Activated naive CD4-positive, alpha-beta T cell treated with anti-CD3 and anti-CD28 coated beads, Interleukin-2, amount 10 ng/mL, durations not matched to agents 7 days and 5 days (primary cell): ENCODE measurements at regions of chr4 and their contacts with region 1.

Region 1: GRCh38 chr4:109574102-109574850 is 14.2 kb downstream of the MCUB start:
- DNase-seq: peak; percentile 33
- H3K4me3 Mint-ChIP-seq: no peak overlapping the region
- H3K27ac Mint-ChIP-seq: no peak overlapping the region
- H3K4me1 Mint-ChIP-seq: peaks cover 45% of the 10 kb centered on the region
- H3K27me3 Mint-ChIP-seq: no peaks in the 10 kb centered on the region

Region 2: GRCh38 chr4:109433205-109434006 is 140.9 kb before region 1 on chr4 and contains the start of gene SEC24B:
- CTCF ChIA-PET with region 1: interaction called, 14 read pairs
- DNase-seq: peak; percentile 94
- H3K4me3 Mint-ChIP-seq: peak within 1 kb of the TSS; percentile 84
- H3K27ac Mint-ChIP-seq: peak within 1 kb of the TSS; percentile 92
- H3K4me1 Mint-ChIP-seq: peaks cover 52% of the 10 kb centered on the region
- H3K27me3 Mint-ChIP-seq: no peaks in the 10 kb centered on the region

Region 3: GRCh38 chr4:109589605-109590004 is 15.3 kb after region 1 on chr4:
- CTCF ChIA-PET with region 1: no interaction called
- DNase-seq: no peak
- H3K4me3 Mint-ChIP-seq: no peak overlapping the region
- H3K27ac Mint-ChIP-seq: no peak overlapping the region
- H3K4me1 Mint-ChIP-seq: peaks cover 57% of the 10 kb centered on the region
- H3K27me3 Mint-ChIP-seq: no peaks in the 10 kb centered on the region

Region 4: DNA sequence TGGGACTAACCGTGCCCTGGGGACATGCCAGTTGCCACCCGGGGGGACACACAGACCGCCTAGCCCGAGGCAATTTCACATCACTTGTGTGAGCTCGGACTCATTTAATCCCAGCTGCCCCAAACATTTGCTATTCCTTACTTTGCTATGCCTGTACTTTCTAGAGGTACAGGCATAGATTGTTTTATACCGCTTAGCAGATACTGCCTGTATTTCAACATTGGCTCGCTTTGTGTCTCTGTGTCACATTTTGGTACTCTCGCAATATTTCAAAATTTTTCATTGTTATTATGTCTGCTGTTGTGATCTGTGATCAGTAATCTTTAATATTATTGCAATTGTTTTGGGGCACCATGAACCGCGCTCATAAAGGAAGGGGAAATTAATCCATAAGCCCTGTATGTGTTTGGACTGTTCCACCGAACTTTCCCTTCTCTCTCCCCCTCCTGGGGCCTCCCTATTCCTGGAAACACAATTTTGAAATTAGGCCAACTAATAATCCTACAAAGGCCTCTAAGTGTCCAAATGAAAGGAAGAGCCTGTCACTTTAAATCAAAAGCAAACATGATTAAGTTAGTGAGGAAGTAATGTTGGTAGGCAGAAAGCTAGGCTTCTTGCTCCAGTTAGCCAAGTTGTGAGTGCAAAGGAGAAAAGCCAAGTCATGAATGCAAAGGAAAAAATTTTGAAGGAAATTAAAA is 129.5 kb after region 1 on chr4:
- CTCF ChIA-PET with region 1: no interaction called
- DNase-seq: no peak
- H3K4me3 Mint-ChIP-seq: peak overlapping the region; percentile 92
- H3K27ac Mint-ChIP-seq: peak overlapping the region; percentile 94
- H3K4me1 Mint-ChIP-seq: peaks cover 34% of the 10 kb centered on the region
- H3K27me3 Mint-ChIP-seq: no peaks in the 10 kb centered on the region